Thyroid gland (tissue), 4 donors: ENCODE measurements at regions of chr17 and their contacts with region 1.

Region 1: DNA sequence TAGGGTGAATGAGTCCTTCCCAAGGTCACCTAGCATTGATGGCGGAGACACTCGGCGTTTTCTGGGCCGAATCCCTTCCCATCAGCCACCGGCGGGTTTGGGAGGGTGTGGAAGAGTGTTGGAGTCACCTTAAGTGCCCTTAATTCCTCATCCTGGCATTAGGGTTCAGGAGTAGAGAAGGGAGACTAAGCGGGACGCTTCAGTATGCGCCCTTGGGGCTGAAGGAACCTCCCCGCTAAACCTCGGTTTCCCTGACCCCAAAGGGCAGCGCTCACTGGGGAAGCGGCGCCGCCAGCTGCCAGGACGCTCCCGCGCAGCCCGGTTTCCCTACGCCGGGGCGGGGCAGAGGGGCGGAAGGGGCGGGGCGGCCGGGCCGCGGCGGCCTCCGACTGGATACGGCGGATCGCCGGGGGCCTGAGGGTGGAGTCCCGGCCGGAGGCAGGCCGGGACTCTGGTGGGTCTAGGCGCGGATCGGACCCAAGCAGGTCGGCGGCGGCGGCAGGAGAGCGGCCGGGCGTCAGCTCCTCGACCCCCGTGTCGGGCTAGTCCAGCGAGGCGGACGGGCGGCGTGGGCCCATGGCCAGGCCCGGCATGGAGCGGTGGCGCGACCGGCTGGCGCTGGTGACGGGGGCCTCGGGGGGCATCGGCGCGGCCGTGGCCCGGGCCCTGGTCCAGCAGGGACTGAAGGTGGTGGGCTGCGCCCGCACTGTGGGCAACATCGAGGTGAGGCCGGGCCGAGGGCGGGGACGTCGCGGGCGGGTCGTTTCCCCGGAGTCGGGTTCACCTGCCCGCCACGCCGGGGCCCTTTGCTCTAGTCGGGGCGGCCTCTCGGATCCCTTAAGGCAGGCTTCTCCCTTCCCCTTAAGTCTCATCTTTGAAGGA is at the start of gene DHRS11:
- DNase-seq: peak; percentile 83 to 86
- H3K4me3 ChIP-seq: peak within 1 kb of the TSS; percentile 83 to 93 (median 91)
- H3K27ac ChIP-seq: no peak within 1 kb of the TSS
- H3K4me1 ChIP-seq: peaks cover 12 to 14% of the 10 kb centered on the region in 2 donors
- H3K27me3 ChIP-seq: no peaks in the 10 kb centered on the region
- CTCF ChIP-seq: peak in 1 of 6 experiments; percentile 12
- POLR2A ChIP-seq: peak in 1 of 2 donors; percentile 53
- total RNA-seq, gene DHRS11: 12.3 to 28.4 (median 21.4) TPM

Region 2: DNA sequence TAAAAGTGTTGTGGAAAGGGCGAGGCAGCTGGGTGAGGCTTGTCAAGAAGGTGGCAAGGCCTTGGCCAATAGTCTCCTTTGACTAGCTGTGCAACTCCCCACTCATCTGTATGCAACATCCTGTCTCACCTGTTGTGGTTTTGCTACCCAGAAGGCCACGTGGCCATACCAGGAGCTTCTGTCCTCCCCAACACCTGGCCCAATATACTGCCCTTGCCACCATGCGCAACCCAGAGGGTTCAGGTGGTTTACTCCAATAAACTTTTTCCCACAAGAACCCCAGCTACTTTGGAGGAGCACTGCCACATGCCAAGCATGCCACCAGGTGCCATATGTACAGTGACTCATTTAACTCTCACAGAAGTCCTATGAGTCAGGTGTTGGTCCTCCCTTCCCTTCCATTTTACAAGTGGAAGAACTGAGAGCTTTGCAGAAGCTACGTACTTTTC is 67.2 kb before region 1 on chr17:
- intact Hi-C with region 1: no loop called
- DNase-seq: no peak
- H3K4me3 ChIP-seq: no peak overlapping the region
- H3K27ac ChIP-seq: no peak overlapping the region
- H3K4me1 ChIP-seq: no peaks in the 10 kb centered on the region
- H3K27me3 ChIP-seq: no peaks in the 10 kb centered on the region
- CTCF ChIP-seq: no peak
- POLR2A ChIP-seq: no peak

Region 3: DNA sequence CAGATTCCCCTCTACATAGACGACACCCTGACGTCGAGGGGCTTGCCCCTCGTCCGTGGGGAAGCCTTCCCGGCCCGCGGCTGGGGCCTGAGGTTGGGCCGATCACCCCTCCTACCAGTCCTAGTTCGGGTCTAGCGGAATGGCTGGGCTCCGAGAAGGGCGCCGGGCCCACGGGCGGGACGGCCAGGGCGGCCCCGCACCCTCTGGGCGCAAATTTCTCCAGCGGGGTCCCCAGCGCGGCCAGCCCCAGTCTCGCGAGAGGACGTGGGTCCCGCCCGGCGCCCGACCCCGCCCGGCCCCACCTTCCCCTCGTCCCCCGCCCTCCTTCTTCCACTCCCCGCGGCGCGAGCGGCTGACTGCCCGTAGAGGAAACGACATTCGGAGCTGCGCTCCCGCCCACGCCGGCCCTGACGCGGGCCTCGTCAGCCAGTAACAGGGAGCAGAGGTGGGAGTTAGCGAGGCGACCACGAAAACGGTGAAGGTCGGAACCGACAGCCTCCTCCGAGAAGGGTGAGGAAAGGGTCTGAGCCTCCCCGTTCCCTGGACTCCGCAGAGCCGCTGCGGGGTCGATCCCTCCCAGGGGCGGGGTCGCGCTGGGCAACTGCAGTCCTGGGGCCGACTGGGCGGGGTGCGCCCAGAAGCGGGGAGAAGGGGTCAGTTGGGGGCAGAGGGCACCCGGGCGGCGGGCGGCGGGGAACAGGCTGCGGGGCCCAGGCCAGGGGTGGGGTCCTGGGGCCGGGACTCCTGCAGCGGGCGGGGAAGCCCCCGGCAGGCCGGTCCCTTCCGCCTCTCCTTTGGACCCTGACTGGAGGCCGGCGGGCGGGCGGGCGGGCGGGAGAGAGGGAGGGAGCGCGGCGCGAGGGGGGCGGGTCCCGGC is 46.8 kb before region 1 on chr17 and contains the start of gene GGNBP2:
- intact Hi-C with region 1: loop called (anchors 5 kb)
- DNase-seq: peak; percentile 88 to 93
- H3K4me3 ChIP-seq: peak within 1 kb of the TSS; percentile 57 to 97 (median 94)
- H3K27ac ChIP-seq: peak within 1 kb of the TSS; percentile 97 to 100 (median 99)
- H3K4me1 ChIP-seq: peaks cover 32 to 39% of the 10 kb centered on the region in 2 donors
- H3K27me3 ChIP-seq: no peaks in the 10 kb centered on the region
- CTCF ChIP-seq: no peak
- POLR2A ChIP-seq: peak; percentile 50 to 71
- total RNA-seq, gene GGNBP2: 47.3 to 74.1 (median 58.0) TPM

Region 4: DNA sequence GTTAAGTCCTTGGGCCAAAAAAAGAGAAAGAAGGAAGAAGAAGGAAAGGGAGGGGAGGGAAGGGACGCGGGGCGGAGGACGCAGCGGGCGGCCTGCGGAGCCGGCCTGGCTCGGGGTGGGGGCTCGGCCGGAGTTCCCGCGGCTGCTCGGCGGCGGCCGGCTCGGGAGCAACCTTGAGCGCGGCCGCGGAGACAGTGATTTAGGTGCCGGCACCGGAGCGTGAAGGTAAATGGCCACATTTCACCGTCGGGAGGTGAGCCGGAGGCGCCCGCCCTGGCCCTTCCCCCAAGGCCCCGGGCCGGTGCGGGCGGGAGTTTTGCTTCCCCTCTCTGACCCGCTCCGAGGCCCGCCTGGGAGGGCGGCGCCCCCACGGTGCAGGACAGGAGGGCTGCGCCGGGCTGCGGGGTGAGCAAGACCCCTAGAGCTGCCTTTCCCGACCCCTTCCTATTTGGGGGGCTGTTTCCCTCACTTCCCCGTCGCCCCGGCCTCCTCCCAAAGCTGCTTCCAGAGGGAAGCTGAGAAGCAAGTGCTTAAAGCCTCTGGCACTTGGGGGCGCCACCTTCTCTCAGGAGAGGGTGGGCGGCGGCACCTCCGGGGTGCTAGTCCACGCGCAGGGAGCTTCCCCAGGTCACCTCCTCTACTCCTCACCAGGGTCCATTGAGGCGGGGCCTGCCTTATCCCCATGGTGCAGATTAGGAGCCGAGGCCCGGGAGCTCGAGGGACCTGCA is 66.3 kb after region 1 on chr17:
- intact Hi-C with region 1: no loop called
- DNase-seq: peak in 1 of 2 donors; percentile 18
- H3K4me3 ChIP-seq: peak overlapping the region in 2 of 3 donors; percentile 5 to 13
- H3K27ac ChIP-seq: no peak overlapping the region
- H3K4me1 ChIP-seq: peaks cover 0 to 7% of the 10 kb centered on the region in 2 donors
- H3K27me3 ChIP-seq: no peaks in the 10 kb centered on the region
- CTCF ChIP-seq: no peak
- POLR2A ChIP-seq: no peak